T-cell (primary cell): ENCODE measurements at regions of chr3 and their contacts with region 1.

Region 1: GRCh38 chr3:101803173-101803782 is 24.3 kb downstream of the NXPE3 start:
- DNase-seq: peak in 30 of 35 experiments; percentile 2 to 88 (median 44)
- ATAC-seq: peak; percentile 96 to 99 (median 98)
- H3K4me3 ChIP-seq: no peak overlapping the region
- H3K4me3 Mint-ChIP-seq: no peak overlapping the region
- H3K27ac ChIP-seq: peak overlapping the region; percentile 25
- H3K27ac Mint-ChIP-seq: peak overlapping the region; percentile 73 to 81
- H3K4me1 ChIP-seq: peaks cover 0 to 3% of the 10 kb centered on the region in 2 experiments
- H3K4me1 Mint-ChIP-seq: peaks cover 34 to 50% (median 39%) of the 10 kb centered on the region in 3 donors
- H3K27me3 ChIP-seq: no peaks in the 10 kb centered on the region
- H3K27me3 Mint-ChIP-seq: no peaks in the 10 kb centered on the region

Region 2: DNA sequence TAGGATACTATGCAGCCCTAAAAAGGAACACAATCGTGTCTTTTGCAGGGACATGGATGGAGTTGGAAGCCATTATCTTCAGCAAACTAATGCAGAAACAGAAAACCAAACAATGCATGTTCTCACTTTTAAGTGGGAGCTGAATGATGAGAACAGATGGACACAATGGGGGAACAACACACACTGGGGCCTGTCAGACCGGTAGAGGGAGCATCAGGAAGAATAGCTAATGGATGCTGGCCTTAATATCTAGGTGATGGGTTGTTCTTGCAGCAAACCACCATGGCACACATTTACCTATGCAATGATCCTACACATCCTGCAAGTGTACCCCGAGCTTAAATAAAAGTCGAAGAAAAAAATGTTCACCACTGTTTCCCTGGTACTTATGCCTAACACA is 307.7 kb before region 1 on chr3:
- CTCF ChIA-PET with region 1: no interaction called
- POLR2A ChIA-PET with region 1: no interaction called
- DNase-seq: no peak
- ATAC-seq: no peak
- H3K4me3 ChIP-seq: no peak overlapping the region
- H3K4me3 Mint-ChIP-seq: no peak overlapping the region
- H3K27ac ChIP-seq: no peak overlapping the region
- H3K27ac Mint-ChIP-seq: no peak overlapping the region
- H3K4me1 ChIP-seq: peaks cover 0 to 2% of the 10 kb centered on the region in 2 experiments
- H3K4me1 Mint-ChIP-seq: peaks cover 32 to 54% (median 53%) of the 10 kb centered on the region in 3 donors
- H3K27me3 ChIP-seq: no peaks in the 10 kb centered on the region
- H3K27me3 Mint-ChIP-seq: no peaks in the 10 kb centered on the region

Region 3: GRCh38 chr3:101611023-101611422 is 192.3 kb before region 1 on chr3:
- CTCF ChIA-PET with region 1: no interaction called
- POLR2A ChIA-PET with region 1: no interaction called
- DNase-seq: no peak
- ATAC-seq: no peak
- H3K4me3 ChIP-seq: no peak overlapping the region
- H3K4me3 Mint-ChIP-seq: no peak overlapping the region
- H3K27ac ChIP-seq: no peak overlapping the region
- H3K27ac Mint-ChIP-seq: no peak overlapping the region
- H3K4me1 ChIP-seq: no peaks in the 10 kb centered on the region
- H3K4me1 Mint-ChIP-seq: no peaks in the 10 kb centered on the region
- H3K27me3 ChIP-seq: no peaks in the 10 kb centered on the region
- H3K27me3 Mint-ChIP-seq: no peaks in the 10 kb centered on the region

Region 4: DNA sequence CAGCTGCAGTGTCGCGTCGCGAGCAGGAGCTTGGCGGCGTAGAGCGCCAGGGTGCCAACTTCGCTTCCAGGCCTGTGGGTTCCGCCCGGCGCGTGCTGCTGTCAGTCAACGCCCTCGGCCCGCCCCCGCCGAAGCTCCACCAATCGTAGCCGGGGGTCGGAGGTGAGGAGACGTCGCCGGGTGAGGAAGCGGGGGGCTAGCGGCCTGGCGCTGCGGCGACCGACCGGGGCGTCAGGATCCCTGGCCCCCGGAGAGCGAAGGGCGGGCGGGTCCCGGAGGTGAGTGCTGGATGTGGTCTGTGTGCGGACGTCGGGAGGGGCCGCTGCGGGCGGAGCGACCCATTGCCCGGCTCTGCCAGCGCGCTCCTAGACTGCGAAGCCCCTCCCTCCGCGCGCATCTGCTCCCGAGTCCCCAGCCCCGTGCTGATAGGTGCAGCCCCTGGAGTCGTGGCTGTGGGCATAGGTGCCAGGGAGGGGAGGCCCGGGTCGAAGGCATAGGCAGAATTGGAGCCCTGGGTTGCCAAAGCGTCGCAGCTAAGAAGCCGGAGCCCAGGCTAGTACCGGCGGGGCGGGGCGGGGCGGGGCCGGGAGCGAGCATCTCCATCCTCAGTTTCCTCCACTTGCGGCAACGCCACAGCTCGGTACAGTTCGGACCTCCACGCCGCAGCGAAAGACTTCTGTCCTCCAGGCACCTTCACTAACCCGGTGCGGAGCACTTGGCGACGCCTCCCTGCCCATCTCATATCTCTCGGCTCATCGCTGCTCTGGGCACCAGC is 24.0 kb before region 1 on chr3 and contains the start of gene NXPE3:
- CTCF ChIA-PET with region 1: interaction called, 4 to 11 read pairs
- POLR2A ChIA-PET with region 1: no interaction called
- DNase-seq: peak; percentile 89 to 97 (median 94)
- ATAC-seq: peak; percentile 92 to 95 (median 94)
- H3K4me3 ChIP-seq: peak within 1 kb of the TSS; percentile 72 to 97
- H3K4me3 Mint-ChIP-seq: peak within 1 kb of the TSS; percentile 86 to 92 (median 91)
- H3K27ac ChIP-seq: peak within 1 kb of the TSS; percentile 92
- H3K27ac Mint-ChIP-seq: peak within 1 kb of the TSS; percentile 99 to 100
- H3K4me1 ChIP-seq: peaks cover 24 to 25% of the 10 kb centered on the region in 2 experiments
- H3K4me1 Mint-ChIP-seq: peaks cover 51 to 59% (median 53%) of the 10 kb centered on the region in 3 donors
- H3K27me3 ChIP-seq: no peaks in the 10 kb centered on the region
- H3K27me3 Mint-ChIP-seq: no peaks in the 10 kb centered on the region
- total RNA-seq, gene NXPE3: 38.0 to 44.8 (median 41.3) TPM

Region 5: DNA sequence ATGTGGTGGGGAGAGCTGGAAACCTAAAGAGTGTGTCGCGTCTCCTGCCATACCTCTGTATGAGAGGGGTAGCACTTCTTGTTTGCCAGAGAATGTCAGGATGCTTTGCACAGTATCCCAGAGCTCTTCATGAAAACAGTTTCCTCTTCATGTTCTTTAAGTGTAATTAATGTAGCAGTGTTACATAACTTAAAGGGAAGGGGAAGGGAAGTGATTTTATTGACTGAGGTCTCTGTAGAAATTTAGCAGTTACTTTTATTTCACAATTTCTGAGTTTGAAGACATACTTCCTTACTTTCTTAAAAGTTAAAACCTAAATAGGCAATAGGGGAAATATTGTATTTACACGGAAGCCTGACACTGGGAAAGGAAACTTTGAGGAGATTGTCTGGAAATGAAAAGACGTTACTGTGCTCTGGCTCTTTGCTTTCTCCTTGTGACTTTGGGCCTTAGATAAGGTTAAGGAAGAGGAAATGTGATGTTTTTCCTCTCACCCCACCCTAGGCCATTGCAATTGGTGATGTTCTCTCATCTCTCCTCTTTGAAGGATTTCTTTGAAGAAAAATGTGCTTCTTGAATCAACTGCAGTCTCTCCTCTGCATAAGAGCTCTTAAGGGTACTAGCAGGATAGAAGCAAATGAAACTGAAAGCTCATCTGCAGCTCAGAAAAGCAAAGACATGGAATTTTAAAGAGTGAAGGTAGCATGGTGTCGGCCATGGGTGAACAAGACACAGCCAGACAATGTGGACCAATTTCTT is 18.2 kb before region 1 on chr3:
- CTCF ChIA-PET with region 1: interaction called, 6 to 13 read pairs
- POLR2A ChIA-PET with region 1: interaction called, 3 to 5 read pairs
- DNase-seq: peak in 3 of 35 experiments; percentile 13 to 48 (median 24)
- ATAC-seq: peak; percentile 73 to 96 (median 86)
- H3K4me3 ChIP-seq: peak overlapping the region in 1 of 2 donors; percentile 27
- H3K4me3 Mint-ChIP-seq: peak overlapping the region; percentile 35 to 76 (median 37)
- H3K27ac ChIP-seq: peak overlapping the region; percentile 57
- H3K27ac Mint-ChIP-seq: peak overlapping the region; percentile 89 to 94
- H3K4me1 ChIP-seq: peaks cover 30 to 43% of the 10 kb centered on the region in 2 experiments
- H3K4me1 Mint-ChIP-seq: peaks cover 73 to 78% (median 77%) of the 10 kb centered on the region in 3 donors
- H3K27me3 ChIP-seq: no peaks in the 10 kb centered on the region
- H3K27me3 Mint-ChIP-seq: no peaks in the 10 kb centered on the region

Region 6: DNA sequence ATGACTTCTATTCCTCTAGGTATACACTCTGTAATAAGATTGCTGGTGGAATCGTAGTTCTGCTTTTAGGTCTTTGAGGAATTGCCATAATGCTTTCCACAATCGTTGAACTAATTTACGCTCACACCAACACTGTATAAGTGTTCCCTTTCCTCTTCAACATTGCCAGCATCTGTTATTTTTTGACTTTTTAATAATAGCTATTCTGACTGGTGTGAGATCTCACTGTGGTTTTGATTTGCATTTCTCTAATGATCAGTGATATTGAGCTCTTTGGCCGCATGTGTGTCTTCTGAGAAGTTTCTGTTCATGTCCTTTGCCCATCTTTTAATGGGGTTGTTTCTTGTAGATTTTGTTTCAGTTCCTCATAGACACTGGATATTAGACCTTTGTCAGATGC is 11.5 kb before region 1 on chr3:
- CTCF ChIA-PET with region 1: interaction called, 12 to 13 read pairs
- POLR2A ChIA-PET with region 1: interaction called in 1 of 2 experiments, 5 read pairs
- DNase-seq: no peak
- ATAC-seq: no peak
- H3K4me3 ChIP-seq: no peak overlapping the region
- H3K4me3 Mint-ChIP-seq: peak overlapping the region in 1 of 3 donors; percentile 29
- H3K27ac ChIP-seq: no peak overlapping the region
- H3K27ac Mint-ChIP-seq: peak overlapping the region; percentile 72 to 85
- H3K4me1 ChIP-seq: peaks cover 7 to 14% of the 10 kb centered on the region in 2 experiments
- H3K4me1 Mint-ChIP-seq: peaks cover 76 to 86% (median 78%) of the 10 kb centered on the region in 3 donors
- H3K27me3 ChIP-seq: no peaks in the 10 kb centered on the region
- H3K27me3 Mint-ChIP-seq: no peaks in the 10 kb centered on the region